Activated CD4-positive, alpha-beta memory T cell treated with anti-CD3 and anti-CD28 coated beads, Interleukin-2, amount 10 ng/mL, durations not matched to agents 7 days and 5 days (primary cell): ENCODE measurements at regions of chr17 and their contacts with region 1.

Region 1: GRCh38 chr17:2214047-2214928 is 89.3 kb downstream of the SMG6 start:
- DNase-seq: no peak
- H3K4me3 Mint-ChIP-seq: peak overlapping the region; percentile 6
- H3K27ac Mint-ChIP-seq: peak overlapping the region; percentile 93
- H3K4me1 Mint-ChIP-seq: peaks cover 62% of the 10 kb centered on the region
- H3K27me3 Mint-ChIP-seq: no peaks in the 10 kb centered on the region

Region 2: DNA sequence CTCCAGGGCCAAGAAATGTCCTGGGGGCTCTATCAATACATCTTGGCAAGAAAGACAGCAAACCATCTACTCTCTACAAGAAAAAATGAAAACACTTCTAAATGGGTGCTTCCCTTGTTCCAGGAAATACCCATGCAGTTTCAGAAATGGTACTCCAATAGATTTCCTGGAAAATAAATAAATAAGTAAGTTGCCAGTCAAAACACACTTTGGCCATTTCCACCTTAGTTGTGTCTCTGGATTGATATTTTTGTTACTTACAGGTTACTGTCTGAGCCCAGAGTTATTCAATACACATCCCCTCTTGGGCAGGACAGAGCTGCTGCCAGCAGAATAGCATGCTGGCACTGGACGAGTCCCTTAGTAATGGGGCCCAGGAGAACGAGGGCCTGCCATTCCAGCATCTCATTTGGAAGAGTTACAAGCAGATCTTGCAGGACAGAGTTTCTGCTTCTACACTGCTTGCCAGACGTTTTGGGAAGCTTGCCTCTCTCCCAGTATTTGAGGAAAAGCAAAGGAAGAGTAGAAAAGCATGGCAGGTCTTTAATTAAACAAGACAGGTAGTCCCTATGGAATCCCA is 11.2 kb before region 1 on chr17:
- CTCF ChIA-PET with region 1: interaction called, 6 read pairs
- POLR2A ChIA-PET with region 1: interaction called, 13 read pairs
- DNase-seq: no peak
- H3K4me3 Mint-ChIP-seq: peak overlapping the region; percentile 8
- H3K27ac Mint-ChIP-seq: peak overlapping the region; percentile 85
- H3K4me1 Mint-ChIP-seq: peaks cover 33% of the 10 kb centered on the region
- H3K27me3 Mint-ChIP-seq: no peaks in the 10 kb centered on the region